Posterior vena cava (tissue), 2 donors: ENCODE measurements at regions of chr10 and their contacts with region 1.

Region 1: DNA sequence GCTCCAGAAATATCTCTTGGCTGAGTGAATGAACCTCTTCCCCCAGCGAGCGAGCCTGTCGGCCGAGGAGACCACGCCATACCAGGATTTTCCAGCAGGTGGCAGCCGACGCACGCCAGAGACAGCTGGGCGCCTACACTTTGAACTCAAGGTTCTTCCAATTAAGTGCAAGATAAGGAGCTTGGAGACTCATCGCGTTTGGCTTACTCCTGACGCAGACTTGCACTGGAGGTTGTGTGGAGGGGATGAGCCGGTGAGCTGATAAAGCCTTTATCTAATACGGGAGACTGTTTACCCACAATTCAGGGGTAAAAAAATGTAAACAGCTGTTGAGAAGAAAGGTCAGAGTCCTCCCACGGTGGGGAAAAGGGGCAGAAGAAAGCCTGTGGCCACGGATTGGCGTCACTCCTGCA is 45.9 kb upstream of the EMX2 start:
- DNase-seq: peak; percentile 93

Region 2: DNA sequence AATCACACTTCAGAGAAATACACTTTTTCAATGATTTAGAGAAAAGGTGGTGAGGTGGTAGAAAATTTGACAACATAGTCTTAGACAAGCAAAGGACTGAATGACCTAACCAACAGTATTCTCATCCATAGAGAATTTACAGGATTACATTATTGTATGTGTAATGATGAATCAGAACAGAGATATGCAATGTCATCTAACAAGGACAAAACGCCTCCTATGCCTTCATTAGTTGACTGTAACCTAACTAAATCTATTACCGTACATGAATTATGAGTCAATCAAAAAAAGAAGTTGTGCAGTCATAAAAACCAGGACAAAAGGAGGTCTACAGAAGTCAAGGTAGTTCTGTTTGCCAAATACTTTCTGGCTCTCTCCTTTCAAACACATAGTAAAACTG is 483.6 kb after region 1 on chr10:
- intact Hi-C with region 1: no loop called
- DNase-seq: no peak

Region 3: GRCh38 chr10:118241229-118242137 is 744.9 kb after region 1 on chr10:
- intact Hi-C with region 1: loop called in 1 of 2 experiments (anchors 5 kb)
- DNase-seq: peak; percentile 88

Region 4: DNA sequence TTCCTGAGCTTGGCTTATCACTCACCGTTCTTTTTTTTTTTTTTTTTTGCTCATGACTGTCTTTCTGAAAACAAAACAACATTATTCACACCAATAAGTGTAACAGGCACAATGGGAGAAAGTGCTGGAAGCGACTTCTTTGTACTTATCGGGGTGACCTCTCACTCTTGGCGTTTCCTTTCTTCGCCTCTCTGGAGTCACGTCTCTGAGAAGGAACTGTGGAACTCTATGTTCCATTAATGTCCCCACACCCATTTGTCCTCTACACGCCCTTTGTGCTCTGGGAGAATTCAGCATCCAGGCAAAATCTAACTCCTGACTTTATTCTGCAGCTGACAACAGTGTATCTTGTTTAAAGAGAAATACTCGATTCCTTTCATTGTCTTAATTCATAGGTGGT is 916.3 kb after region 1 on chr10:
- intact Hi-C with region 1: loop called in 1 of 2 experiments (anchors 10 kb)
- DNase-seq: no peak